Dorsolateral prefrontal cortex (tissue), 120 donors: ENCODE measurements at regions of chr1 and their contacts with region 1.

Region 1: DNA sequence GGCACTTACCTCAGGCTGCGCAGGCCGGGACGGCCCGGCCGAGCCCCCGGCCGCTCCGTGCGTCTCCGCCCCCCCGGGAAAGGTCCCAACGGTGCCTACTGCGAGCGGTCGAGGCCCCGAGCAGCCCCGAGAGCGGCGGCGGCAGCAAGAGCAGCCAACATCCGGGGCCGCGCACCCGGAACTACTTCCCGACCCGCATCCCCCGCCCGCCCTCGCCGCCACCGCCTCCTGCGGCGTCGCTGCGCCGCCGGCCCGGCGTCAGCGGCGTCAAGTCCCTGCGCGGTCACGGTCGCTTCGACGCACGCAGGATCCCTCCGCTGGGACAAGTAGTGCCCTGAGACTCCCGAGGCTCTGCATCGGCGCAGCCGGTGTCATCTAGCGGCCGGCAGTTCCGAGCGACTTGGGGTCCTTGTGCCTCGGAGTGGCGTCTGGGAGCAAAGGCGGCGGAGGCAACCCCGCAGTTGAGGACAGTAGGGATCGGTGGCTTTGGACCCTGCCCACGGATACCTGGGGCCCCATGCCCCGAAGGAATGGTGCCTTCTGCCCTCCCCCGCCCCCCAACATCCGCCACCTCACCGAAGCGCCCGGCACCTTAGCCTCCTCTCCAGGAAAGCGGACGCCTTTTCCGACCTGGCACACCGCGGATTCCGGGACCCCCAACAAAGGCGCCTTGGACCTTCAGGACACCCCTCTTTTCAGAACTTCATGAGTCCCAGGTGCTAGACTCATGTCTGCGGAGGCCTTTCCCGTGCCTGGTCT is at the start of gene FOXJ3:
- DNase-seq: peak; percentile 84 to 95 (median 90)
- H3K4me3 ChIP-seq: peak within 1 kb of the TSS; percentile 72 to 100 (median 96)
- H3K27ac ChIP-seq: peak within 1 kb of the TSS; percentile 73 to 99 (median 90)
- H3K27me3 ChIP-seq: no peaks in the 10 kb centered on the region
- CTCF ChIP-seq: peak in 39 of 56 donors; percentile 6 to 61 (median 32)
- total RNA-seq, gene FOXJ3: 58.3 to 97.9 (median 76.4) TPM

Region 2: DNA sequence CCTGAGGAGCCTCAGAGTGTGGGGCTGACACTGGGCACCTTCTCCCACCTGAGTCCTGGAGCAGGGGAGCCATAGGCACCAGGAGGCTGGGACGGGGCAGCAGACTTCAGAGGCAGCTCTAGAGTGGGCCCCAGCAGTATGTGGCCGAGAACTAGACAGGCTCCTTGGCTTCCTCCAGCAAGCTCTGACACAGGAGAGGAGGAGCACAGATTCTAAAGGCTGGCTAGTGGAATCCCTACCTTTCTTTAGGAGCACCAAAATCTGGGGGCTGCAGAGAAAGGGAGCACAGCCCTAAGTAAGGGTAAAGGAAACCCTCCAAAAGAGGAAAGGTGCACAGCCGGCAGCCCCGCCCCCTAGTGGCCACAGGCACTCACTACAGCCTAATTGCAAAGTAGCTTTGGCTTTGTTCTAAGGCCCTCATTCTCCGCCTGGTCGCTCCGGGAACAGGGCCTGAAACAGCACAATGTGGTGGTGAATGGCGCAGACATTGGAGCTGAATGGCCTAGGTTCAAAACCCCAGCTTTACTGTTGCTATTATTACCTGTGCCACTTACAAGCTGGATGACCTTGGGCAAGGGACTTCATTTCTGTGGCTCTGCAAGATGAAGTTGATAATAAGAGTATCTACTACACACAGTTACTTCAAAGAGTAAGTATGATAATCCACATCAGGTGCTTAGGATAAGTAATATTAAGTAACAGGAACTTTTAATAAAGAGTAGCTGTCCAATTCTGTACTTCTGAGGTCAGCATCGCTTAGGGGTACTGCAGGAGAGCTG is 161.9 kb before region 1 on chr1:
- intact Hi-C with region 1: loop called (anchors 2 kb)
- DNase-seq: peak in 9 of 10 donors; percentile 57 to 79 (median 71)
- H3K4me3 ChIP-seq: peak overlapping the region in 1 of 59 donors; percentile 0
- H3K27ac ChIP-seq: peak overlapping the region in 36 of 59 donors; percentile 0 to 64 (median 30)
- H3K27me3 ChIP-seq: no peaks in the 10 kb centered on the region
- CTCF ChIP-seq: peak; percentile 76 to 99 (median 95)

Region 3: GRCh38 chr1:42282024-42282579 is 53.1 kb before region 1 on chr1:
- intact Hi-C with region 1: no loop called
- DNase-seq: peak in 1 of 10 donors; percentile 35
- H3K4me3 ChIP-seq: no peak overlapping the region
- H3K27ac ChIP-seq: peak overlapping the region in 1 of 59 donors; percentile 33
- H3K27me3 ChIP-seq: no peaks in the 10 kb centered on the region
- CTCF ChIP-seq: no peak

Region 4: DNA sequence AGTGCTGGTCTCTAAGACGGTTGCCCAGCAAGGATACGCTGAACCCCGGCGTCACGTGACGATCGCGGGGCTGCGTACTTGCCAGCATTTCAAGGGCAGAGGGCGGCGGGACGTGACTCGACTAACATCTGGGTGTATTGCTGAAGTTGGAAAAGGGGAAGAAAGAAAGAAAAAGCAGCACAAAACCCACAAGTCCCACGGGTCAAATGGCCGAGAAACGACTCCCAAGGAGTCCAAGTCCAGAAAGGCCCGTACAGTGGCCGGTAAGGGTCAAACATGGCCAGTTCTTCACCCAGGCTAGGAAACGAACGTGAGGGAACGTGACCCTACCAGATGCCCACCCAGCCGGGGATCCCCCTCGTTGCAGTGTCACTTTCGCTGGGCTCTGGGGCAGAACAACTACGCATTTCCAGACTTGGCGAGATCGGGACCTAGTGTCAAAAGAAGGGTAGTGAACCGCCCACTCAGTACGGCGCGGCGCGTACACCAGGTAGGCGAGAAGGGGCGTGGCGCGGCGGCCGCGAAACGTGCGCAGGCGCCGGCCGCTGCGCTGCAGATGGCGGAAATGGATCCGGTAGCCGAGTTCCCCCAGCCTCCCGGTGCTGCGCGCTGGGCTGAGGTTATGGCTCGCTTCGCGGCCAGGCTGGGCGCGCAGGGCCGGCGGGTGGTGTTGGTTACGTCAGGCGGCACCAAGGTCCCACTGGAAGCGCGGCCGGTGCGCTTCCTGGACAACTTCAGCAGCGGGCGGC is 121.0 kb after region 1 on chr1 and contains the starts of genes PPCS and ZMYND12:
- intact Hi-C with region 1: loop called (anchors 2 kb)
- DNase-seq: peak; percentile 67 to 85 (median 80)
- H3K4me3 ChIP-seq: peak within 1 kb of the TSS; percentile 66 to 99 (median 92)
- H3K27ac ChIP-seq: peak within 1 kb of the TSS; percentile 46 to 97 (median 92)
- H3K27me3 ChIP-seq: no peaks in the 10 kb centered on the region
- CTCF ChIP-seq: peak in 13 of 56 donors; percentile 2 to 31 (median 14)
- total RNA-seq, gene PPCS: 20.6 to 46.2 (median 30.0) TPM
- total RNA-seq, gene ZMYND12: 0.77 to 9.6 (median 3.4) TPM

Region 5: GRCh38 chr1:42681741-42682483 is 346.7 kb after region 1 on chr1 and contains the start of gene YBX1:
- intact Hi-C with region 1: loop called in 1 of 2 experiments (anchors 10 kb)
- DNase-seq: peak; percentile 86 to 99 (median 96)
- H3K4me3 ChIP-seq: peak within 1 kb of the TSS; percentile 70 to 97 (median 87)
- H3K27ac ChIP-seq: peak within 1 kb of the TSS; percentile 61 to 97 (median 91)
- H3K27me3 ChIP-seq: no peaks in the 10 kb centered on the region
- CTCF ChIP-seq: peak in 15 of 56 donors; percentile 6 to 45 (median 17)
- total RNA-seq, gene YBX1: 68.9 to 189 (median 108) TPM